GM10248 (cell line): ENCODE measurements at regions of chr10 and their contacts with region 1.

Region 1: GRCh38 chr10:14500172-14500765 is 169.5 kb upstream of the FRMD4A start:
- DNase-seq: no peak
- CTCF ChIP-seq: no peak

Region 2: GRCh38 chr10:13633689-13634088 is 866.6 kb before region 1 on chr10:
- CTCF ChIA-PET with region 1: no interaction called
- POLR2A ChIA-PET with region 1: no interaction called
- DNase-seq: no peak
- CTCF ChIP-seq: no peak

Region 3: GRCh38 chr10:14349081-14349480 is 151.2 kb before region 1 on chr10:
- CTCF ChIA-PET with region 1: no interaction called
- POLR2A ChIA-PET with region 1: no interaction called
- DNase-seq: no peak
- CTCF ChIP-seq: no peak

Region 4: DNA sequence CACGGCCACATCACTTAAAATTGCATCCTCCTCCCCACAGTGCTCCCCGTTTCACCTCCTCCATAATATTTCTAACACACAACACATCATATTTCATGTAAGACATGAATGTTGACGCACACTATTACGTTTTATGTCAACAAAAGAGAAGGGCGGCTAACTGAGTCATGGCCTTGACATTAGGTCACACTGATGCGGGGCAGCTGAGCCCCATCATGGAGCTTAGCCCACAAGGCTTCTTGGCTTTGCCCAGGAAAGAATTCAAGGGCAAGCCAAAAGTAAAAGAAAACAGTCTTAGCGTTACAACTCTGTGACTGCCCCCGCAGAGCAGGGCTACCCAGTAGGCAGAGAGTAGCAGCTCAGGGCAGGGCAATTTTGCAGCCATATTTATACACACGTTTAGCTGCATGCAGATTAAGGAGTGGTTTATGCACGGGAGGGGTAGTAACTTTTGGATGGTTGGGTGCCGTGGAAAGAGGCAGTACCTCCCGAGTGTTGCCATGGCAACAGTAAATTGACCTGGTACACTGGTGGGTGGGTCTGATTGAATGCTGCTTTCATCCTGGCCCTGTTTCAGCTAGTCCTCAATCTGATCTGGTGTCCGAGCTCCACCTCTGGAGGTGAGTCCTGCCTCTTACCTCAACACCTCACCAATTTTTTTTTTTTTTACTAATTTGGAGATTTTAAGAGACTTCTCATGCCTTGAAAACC is 13.3 kb before region 1 on chr10:
- CTCF ChIA-PET with region 1: interaction called, 15 read pairs
- POLR2A ChIA-PET with region 1: no interaction called
- DNase-seq: no peak
- CTCF ChIP-seq: no peak

Region 5: GRCh38 chr10:14530465-14530864 is 30.2 kb after region 1 on chr10:
- CTCF ChIA-PET with region 1: no interaction called
- POLR2A ChIA-PET with region 1: no interaction called
- DNase-seq: no peak
- CTCF ChIP-seq: no peak

Region 6: DNA sequence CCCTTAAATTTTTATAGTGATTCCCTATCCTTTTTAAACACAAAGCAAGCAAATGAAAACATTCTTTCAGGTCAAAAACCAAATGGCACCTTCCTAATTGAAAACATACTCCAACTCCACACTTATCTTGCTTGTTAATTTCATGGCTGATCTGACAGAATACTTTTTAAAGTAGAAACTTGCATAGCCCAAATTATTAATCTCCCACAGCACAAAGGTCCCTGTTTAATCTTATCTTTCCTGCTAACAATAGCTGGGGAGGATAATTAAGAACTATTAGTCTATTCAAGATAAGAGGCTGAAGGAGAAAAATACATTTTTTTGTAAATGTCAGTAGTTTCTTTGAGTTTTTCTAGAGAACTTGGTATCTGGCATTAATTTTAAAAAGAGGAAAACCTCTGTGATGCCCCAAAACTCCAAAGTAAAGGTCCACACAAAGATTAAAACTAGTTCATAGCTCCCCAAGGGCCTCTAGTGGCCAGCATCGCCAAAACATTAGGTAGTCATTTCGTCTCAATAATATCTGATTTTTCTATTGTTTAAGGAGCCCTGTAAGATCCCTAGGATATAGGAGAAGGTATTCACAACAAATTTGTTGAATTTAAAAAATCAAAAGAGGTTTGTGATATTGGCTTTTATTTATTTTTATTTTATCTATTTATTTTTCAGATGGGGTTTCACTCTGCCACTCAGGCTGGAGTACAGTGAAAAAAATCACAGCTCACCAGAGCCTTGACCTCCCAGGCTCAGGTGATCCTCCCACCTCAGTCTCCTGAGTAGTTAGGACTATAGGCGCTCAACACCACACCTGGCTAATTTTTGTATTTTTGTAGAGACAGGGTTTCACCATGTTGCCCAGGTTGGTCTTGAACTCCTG is 322.8 kb after region 1 on chr10:
- CTCF ChIA-PET with region 1: interaction called, 21 read pairs
- POLR2A ChIA-PET with region 1: no interaction called
- DNase-seq: peak; percentile 58
- CTCF ChIP-seq: peak; percentile 77